Gastrocnemius medialis (tissue), 4 donors: ENCODE measurements at regions of chr11 and their contacts with region 1.

Region 1: DNA sequence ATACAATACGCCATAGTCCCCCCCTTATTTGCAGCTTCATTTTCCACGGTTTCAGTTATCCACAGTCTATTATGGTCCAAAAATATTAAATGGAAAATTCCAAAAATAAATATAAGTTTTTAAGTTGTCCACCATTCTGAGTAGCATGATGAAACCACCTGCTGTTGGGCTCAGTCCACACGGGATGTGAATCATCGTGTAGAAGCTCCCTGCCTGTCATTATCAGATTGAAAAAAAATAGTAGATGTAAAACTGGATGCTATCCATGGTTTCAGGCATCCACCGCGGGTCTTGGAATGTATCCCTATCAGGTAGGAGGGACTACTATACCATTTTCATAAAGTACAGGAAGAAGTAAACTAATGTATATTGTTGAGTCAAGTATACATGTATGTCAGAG is 127.4 kb downstream of the TTC17 start:
- DNase-seq: peak in 1 of 2 donors; percentile 22
- ATAC-seq: no peak
- H3K4me3 ChIP-seq: no peak overlapping the region
- H3K27ac ChIP-seq: peak overlapping the region in 1 of 4 donors; percentile 70
- H3K4me1 ChIP-seq: peaks cover 0 to 14% of the 10 kb centered on the region in 2 donors
- H3K27me3 ChIP-seq: no peaks in the 10 kb centered on the region
- CTCF ChIP-seq: no peak
- POLR2A ChIP-seq: no peak

Region 2: GRCh38 chr11:43573233-43573632 is 87.1 kb after region 1 on chr11:
- in situ Hi-C with region 1: no loop called
- intact Hi-C with region 1: loop called (anchors 5 kb)
- DNase-seq: no peak
- ATAC-seq: no peak
- H3K4me3 ChIP-seq: no peak overlapping the region
- H3K27ac ChIP-seq: no peak overlapping the region
- H3K4me1 ChIP-seq: peaks cover 27 to 39% of the 10 kb centered on the region in 2 donors
- H3K27me3 ChIP-seq: peaks cover 43 to 54% (median 51%) of the 10 kb centered on the region in 3 donors
- CTCF ChIP-seq: peak in 2 of 5 experiments; percentile 12 to 34
- POLR2A ChIP-seq: no peak

Region 3: GRCh38 chr11:43825217-43825816 is 339.2 kb after region 1 on chr11:
- in situ Hi-C with region 1: loop called in 1 of 4 experiments (anchors 25 kb)
- intact Hi-C with region 1: no loop called
- DNase-seq: no peak
- ATAC-seq: peak in 1 of 2 donors; percentile 58
- H3K4me3 ChIP-seq: no peak overlapping the region
- H3K27ac ChIP-seq: no peak overlapping the region
- H3K4me1 ChIP-seq: peaks cover 17 to 24% of the 10 kb centered on the region in 2 donors
- H3K27me3 ChIP-seq: no peaks in the 10 kb centered on the region
- CTCF ChIP-seq: peak; percentile 51 to 73 (median 59)
- POLR2A ChIP-seq: no peak